Gastrocnemius medialis (tissue), 4 donors: ENCODE measurements at regions of chr4 and their contacts with region 1.

Region 1: GRCh38 chr4:123396307-123397143 is at the start of gene SPRY1:
- DNase-seq: peak; percentile 87 to 91
- ATAC-seq: peak; percentile 64 to 66
- H3K4me3 ChIP-seq: peak within 1 kb of the TSS; percentile 82 to 94 (median 88)
- H3K27ac ChIP-seq: peak within 1 kb of the TSS; percentile 91 to 98 (median 96)
- H3K4me1 ChIP-seq: peaks cover 6 to 11% of the 10 kb centered on the region in 2 donors
- H3K27me3 ChIP-seq: no peaks in the 10 kb centered on the region
- CTCF ChIP-seq: no peak
- POLR2A ChIP-seq: peak; percentile 65 to 88
- total RNA-seq, gene SPRY1: 32.8 to 72.2 (median 50.9) TPM

Region 2: GRCh38 chr4:123588631-123589241 is 192.2 kb after region 1 on chr4:
- in situ Hi-C with region 1: loop called in 1 of 4 experiments (anchors 10 kb)
- intact Hi-C with region 1: loop called (anchors 2 kb)
- DNase-seq: peak; percentile 13 to 41
- ATAC-seq: peak; percentile 81 to 86
- H3K4me3 ChIP-seq: peak overlapping the region; percentile 3 to 14 (median 9)
- H3K27ac ChIP-seq: peak overlapping the region; percentile 84 to 91 (median 87)
- H3K4me1 ChIP-seq: peaks cover 14 to 21% of the 10 kb centered on the region in 2 donors
- H3K27me3 ChIP-seq: no peaks in the 10 kb centered on the region
- CTCF ChIP-seq: no peak
- POLR2A ChIP-seq: peak in 1 of 2 donors; percentile 50

Region 3: DNA sequence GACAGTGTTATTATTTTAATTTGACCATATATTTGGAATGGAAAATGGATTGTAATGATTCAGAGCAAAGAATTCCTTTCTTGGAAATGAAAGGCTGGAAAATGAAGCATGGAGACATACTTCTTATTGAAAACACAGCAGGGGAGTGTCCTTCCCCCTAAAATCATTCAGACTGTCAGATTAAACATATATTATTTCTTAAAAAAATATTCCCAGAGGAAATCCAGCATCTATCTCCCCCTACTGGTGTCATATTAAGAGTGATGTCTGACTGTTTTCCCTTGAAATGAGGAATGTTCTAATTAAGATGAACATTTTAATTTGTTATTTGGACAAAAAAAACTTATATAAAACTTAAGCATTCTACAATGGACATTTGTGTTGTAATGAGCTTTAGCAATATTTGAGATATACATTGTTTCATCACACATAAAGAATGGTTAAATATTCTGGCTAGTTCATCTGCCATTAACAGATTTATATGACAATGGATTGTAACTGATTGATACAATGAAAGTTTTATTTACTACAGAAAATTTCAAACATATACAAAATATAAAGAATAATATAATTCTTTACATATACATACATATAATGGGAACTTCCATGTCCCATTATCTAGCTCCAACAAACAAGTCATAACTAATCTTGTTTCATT is 264.7 kb after region 1 on chr4:
- in situ Hi-C with region 1: loop called in 3 of 4 experiments (anchors 5 to 25 kb)
- intact Hi-C with region 1: no loop called
- DNase-seq: no peak
- ATAC-seq: no peak
- H3K4me3 ChIP-seq: no peak overlapping the region
- H3K27ac ChIP-seq: no peak overlapping the region
- H3K4me1 ChIP-seq: peaks cover 8 to 13% of the 10 kb centered on the region in 2 donors
- H3K27me3 ChIP-seq: no peaks in the 10 kb centered on the region
- CTCF ChIP-seq: peak; percentile 28 to 61 (median 46)
- POLR2A ChIP-seq: no peak

Region 4: DNA sequence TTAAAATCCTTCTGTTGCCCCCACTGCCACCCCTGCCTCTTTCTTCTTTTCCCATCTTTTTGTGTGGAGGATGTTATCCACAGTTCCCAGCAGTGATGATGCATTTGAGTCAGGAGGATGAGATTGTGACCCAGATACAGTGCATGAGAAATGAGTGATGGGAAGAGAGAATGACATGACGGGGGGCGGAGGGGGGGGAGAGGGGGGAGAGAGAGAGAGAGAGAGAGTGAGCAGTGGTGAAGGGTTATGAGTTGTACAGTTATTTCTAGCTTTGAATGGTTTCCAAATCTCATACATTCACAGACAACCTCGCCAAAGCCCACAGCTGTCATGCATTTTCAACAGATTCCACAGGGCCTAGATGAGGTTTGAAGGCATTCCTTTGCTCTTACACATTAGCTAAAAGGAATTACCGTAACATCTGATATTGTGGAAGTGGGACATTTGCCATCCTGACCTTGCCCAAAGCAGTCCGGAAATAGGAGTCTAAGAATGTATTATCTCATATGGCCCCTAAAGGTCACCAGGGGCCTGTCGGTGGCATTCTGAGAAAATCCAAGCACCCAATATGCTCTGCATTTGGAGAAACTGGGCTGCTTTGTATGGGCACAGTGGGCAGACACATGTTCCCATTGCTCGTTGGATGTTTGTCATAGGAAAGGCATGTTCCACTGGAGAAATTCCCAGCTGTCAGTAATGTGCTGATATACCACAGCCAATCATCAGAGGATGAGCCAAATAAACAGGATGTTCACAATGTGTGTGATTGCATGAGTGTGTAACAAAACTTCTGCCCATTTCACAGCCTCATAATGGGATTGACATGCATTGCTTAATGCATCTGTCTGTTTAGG is 435.9 kb after region 1 on chr4:
- in situ Hi-C with region 1: loop called in 2 of 4 experiments (anchors 25 kb)
- intact Hi-C with region 1: loop called (anchors 2 kb)
- DNase-seq: peak; percentile 77 to 82
- ATAC-seq: peak; percentile 92 to 95
- H3K4me3 ChIP-seq: peak overlapping the region; percentile 31 to 43 (median 38)
- H3K27ac ChIP-seq: peak overlapping the region; percentile 84 to 92 (median 90)
- H3K4me1 ChIP-seq: peaks cover 18 to 24% of the 10 kb centered on the region in 2 donors
- H3K27me3 ChIP-seq: no peaks in the 10 kb centered on the region
- CTCF ChIP-seq: peak in 1 of 5 experiments; percentile 9
- POLR2A ChIP-seq: no peak

Region 5: DNA sequence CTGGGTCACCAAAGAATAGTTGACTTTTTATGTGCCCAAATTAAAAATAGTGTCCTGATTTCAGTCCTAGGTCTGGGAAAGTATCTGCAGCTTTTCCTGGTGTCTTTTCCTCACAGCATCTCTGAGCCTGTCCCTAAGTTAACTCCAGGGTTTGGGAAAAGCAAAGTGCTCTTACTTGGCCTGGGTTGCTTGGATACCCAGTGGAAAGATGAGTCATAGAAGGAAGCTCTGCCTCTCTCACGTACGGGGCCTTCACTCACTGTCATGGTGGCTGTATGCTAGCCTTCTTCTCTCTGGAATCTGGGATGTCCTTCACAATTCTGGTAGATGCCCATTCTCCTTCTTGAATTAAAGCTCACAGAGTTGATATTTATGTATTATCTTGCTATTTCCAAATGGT is 708.7 kb after region 1 on chr4:
- in situ Hi-C with region 1: loop called (anchors 10 to 25 kb)
- intact Hi-C with region 1: loop called (anchors 5 kb)
- DNase-seq: no peak
- ATAC-seq: no peak
- H3K4me3 ChIP-seq: no peak overlapping the region
- H3K27ac ChIP-seq: no peak overlapping the region
- H3K4me1 ChIP-seq: no peaks in the 10 kb centered on the region
- H3K27me3 ChIP-seq: no peaks in the 10 kb centered on the region
- CTCF ChIP-seq: no peak
- POLR2A ChIP-seq: no peak